Posterior vena cava (tissue), 2 donors: ENCODE measurements at regions of chr1 and their contacts with region 1.

Region 1: GRCh38 chr1:224292419-224292818 is 37.6 kb downstream of the NVL start:
- DNase-seq: no peak

Region 2: DNA sequence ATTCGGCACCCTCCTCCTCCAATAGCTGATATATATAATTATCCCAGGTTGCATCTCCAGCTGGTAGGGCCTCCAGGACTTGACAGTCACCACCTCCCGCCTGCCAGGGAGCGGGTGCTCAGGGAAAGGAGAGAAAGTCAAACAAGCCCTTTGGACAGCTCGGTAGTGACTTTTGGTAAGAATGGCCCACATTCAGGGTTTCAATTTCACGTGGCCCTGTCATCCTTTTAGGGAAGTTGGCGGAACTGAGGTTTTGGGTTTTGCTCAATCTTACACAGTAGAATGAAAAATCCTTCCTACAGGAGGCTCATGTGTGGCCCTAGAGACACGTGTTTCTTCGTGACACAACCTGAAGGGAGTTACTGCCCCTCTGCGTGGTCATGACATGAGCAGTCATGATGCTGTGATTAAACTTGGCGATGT is 671.1 kb before region 1 on chr1:
- intact Hi-C with region 1: no loop called
- DNase-seq: no peak

Region 3: DNA sequence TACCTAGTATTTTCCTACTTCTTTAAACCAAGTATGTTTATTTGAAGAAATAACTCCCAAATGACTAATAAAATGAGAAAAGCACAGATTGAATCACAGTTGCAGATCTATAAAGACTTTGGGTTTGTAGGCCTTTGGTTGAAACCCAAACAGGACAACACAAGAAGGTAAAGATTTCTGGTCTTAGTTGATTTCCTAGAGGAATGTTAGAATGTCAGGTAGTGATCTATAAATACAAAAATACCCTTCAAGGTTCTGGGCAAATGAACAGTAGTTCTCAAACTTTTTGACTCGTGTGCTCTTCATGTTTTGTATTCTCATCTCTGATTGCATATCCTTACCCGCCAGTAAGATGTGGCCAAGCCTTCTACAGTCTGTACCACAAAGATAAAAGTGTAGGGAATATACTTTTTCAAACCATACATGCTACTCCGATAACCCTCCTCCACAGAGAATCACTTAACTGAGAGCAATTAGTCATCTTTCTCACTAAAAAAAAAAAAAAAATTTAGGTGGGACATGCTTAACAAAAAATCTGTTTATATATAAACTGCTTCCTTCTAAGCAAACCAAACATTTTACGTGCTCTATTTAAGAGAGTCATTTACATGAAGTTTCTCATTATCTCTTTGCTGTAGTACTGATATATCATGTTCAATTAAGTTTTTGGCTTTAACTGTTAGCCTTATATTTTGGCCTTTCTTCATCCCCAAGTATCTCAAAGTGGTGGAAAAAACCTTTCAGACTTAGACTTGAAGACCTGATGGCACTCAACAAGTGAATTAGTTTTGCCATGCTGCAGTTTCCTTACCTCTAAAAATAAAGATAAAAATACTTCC is 100.2 kb after region 1 on chr1:
- intact Hi-C with region 1: loop called in 1 of 2 experiments (anchors 10 kb)
- DNase-seq: no peak

Region 4: DNA sequence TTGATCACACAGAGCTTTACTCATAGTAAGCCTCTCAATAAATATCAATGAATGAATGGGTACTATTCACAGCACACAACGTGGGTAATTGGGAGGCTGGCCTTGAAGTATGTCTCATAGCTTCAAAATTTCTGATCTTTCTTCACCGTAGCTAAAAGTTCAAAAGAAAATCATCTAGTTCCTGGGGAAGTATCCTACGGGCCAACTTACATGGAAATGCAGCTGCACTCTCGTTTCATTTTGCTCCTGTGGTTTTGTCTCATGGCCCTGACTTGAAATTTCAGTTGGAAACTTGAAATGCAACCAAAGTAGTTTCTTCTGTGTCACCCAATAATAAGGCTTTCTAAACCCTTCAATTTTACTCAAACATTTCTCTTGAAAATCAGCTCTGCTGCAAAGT is 247.6 kb after region 1 on chr1:
- intact Hi-C with region 1: no loop called
- DNase-seq: no peak

Region 5: GRCh38 chr1:225242623-225243022 is 950.2 kb after region 1 on chr1:
- intact Hi-C with region 1: no loop called
- DNase-seq: no peak